Calu3 (cell line): ENCODE measurements at regions of chr15 and their contacts with region 1.

Region 1: GRCh38 chr15:52179278-52180195 is 11.7 kb downstream of the GNB5 start:
- DNase-seq: peak; percentile 88
- H3K4me3 Mint-ChIP-seq: peak overlapping the region; percentile 83
- H3K27ac Mint-ChIP-seq: peak overlapping the region; percentile 77
- H3K4me1 Mint-ChIP-seq: peaks cover 5% of the 10 kb centered on the region
- H3K27me3 Mint-ChIP-seq: no peaks in the 10 kb centered on the region
- CTCF ChIP-seq: no peak

Region 2: GRCh38 chr15:52208306-52208946 is 28.9 kb after region 1 on chr15:
- CTCF ChIA-PET with region 1: interaction called, 21 read pairs
- intact Hi-C with region 1: loop called (anchors 1 kb)
- DNase-seq: peak; percentile 79
- H3K4me3 Mint-ChIP-seq: no peak overlapping the region
- H3K27ac Mint-ChIP-seq: peak overlapping the region; percentile 37
- H3K4me1 Mint-ChIP-seq: no peaks in the 10 kb centered on the region
- H3K27me3 Mint-ChIP-seq: no peaks in the 10 kb centered on the region
- CTCF ChIP-seq: peak; percentile 71

Region 3: GRCh38 chr15:52227456-52227855 is 47.9 kb after region 1 on chr15:
- CTCF ChIA-PET with region 1: interaction called, 11 read pairs
- intact Hi-C with region 1: loop called (anchors 5 kb)
- DNase-seq: peak; percentile 51
- H3K4me3 Mint-ChIP-seq: no peak overlapping the region
- H3K27ac Mint-ChIP-seq: no peak overlapping the region
- H3K4me1 Mint-ChIP-seq: no peaks in the 10 kb centered on the region
- H3K27me3 Mint-ChIP-seq: no peaks in the 10 kb centered on the region
- CTCF ChIP-seq: peak; percentile 52